ENCODE measurements at regions of chr5 and their contacts with region 1.

Region 1: GRCh38 chr5:95487880-95488279 is 66.9 kb downstream of the SKIC3 start:
- DNase-seq: no peak
- ATAC-seq: no peak
- H3K4me3 Mint-ChIP-seq: no peak overlapping the region
- H3K27ac Mint-ChIP-seq: no peak overlapping the region
- H3K4me1 Mint-ChIP-seq: no peaks in the 10 kb centered on the region
- H3K27me3 Mint-ChIP-seq: no peaks in the 10 kb centered on the region
- CTCF ChIP-seq: no peak

Region 2: DNA sequence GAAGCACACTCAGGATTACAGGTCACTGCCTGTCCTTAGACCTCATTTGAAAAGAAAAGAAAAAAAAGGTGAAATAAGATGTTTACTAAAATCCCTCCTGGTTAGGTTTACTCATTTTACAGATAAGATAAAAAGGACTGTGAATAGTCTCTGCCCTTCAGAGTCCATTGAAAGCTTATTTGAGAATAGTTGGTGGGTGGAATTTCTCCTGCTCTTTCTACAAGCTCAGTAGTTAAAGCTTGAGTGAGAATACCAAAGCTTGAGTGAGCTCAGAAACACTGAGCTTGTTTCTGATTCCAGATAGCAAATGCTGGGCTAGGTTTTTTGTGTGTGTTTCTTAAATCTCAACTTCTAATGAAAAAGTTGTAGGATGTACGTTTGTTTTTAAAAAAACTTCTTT is 762.7 kb before region 1 on chr5:
- CTCF ChIA-PET with region 1: no interaction called
- POLR2A ChIA-PET with region 1: interaction called, 11 read pairs
- intact Hi-C with region 1: no loop called
- DNase-seq: no peak
- ATAC-seq: no peak
- H3K4me3 Mint-ChIP-seq: no peak overlapping the region
- H3K27ac Mint-ChIP-seq: no peak overlapping the region
- H3K4me1 Mint-ChIP-seq: no peaks in the 10 kb centered on the region
- H3K27me3 Mint-ChIP-seq: peaks cover 3% of the 10 kb centered on the region
- CTCF ChIP-seq: no peak

Region 3: DNA sequence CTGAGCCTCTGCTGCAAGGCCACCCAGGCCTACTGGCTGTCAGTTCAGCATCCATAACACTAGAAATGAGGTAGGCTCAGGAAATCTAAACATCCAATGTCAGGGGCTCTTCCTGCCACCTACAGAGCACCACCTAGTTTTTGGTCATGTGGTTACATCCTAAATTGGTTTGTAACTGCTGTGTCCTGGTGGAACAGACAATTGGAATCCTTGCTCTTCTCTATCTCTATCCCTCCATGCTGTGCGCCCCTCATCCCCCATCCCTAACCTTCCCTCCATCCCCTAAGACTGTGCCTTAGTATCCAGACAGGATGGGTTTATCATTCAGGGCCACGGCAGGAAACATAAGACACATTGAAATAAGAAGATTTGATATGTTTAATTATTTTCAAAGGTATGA is 191.6 kb before region 1 on chr5:
- CTCF ChIA-PET with region 1: no interaction called
- POLR2A ChIA-PET with region 1: no interaction called
- intact Hi-C with region 1: no loop called
- DNase-seq: no peak
- ATAC-seq: no peak
- H3K4me3 Mint-ChIP-seq: no peak overlapping the region
- H3K27ac Mint-ChIP-seq: no peak overlapping the region
- H3K4me1 Mint-ChIP-seq: no peaks in the 10 kb centered on the region
- H3K27me3 Mint-ChIP-seq: peaks cover 11% of the 10 kb centered on the region
- CTCF ChIP-seq: no peak

Region 4: GRCh38 chr5:95460662-95461061 is 27.2 kb before region 1 on chr5:
- CTCF ChIA-PET with region 1: no interaction called
- POLR2A ChIA-PET with region 1: no interaction called
- intact Hi-C with region 1: loop called (anchors 1 kb)
- DNase-seq: no peak
- ATAC-seq: no peak
- H3K4me3 Mint-ChIP-seq: no peak overlapping the region
- H3K27ac Mint-ChIP-seq: no peak overlapping the region
- H3K4me1 Mint-ChIP-seq: no peaks in the 10 kb centered on the region
- H3K27me3 Mint-ChIP-seq: no peaks in the 10 kb centered on the region
- CTCF ChIP-seq: no peak

Region 5: GRCh38 chr5:95543017-95543705 is 55.3 kb after region 1 on chr5:
- CTCF ChIA-PET with region 1: no interaction called
- POLR2A ChIA-PET with region 1: no interaction called
- intact Hi-C with region 1: loop called (anchors 5 kb)
- DNase-seq: no peak
- ATAC-seq: no peak
- H3K4me3 Mint-ChIP-seq: no peak overlapping the region
- H3K27ac Mint-ChIP-seq: no peak overlapping the region
- H3K4me1 Mint-ChIP-seq: no peaks in the 10 kb centered on the region
- H3K27me3 Mint-ChIP-seq: no peaks in the 10 kb centered on the region
- CTCF ChIP-seq: no peak